ENCODE measurements at regions of chr13 and their contacts with region 1.

Region 1: DNA sequence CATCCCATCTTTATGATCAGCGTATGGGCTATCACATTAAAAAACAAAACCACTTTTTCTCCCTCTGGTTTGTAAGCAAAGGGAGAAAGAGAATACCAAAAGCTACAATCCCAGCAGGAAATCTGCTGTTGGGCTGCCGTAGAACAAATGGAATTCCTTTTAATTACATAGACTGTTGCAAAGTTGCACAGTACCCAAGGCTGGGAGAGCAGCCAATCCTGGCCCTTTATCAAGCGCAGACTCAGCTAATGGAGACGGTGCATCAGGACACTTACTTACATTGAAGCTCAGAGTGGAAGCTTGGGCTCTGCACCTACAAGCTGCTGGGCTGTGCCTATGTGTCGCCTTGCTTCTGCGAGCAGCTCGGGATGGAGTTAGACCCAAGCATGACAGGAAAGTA is 15.2 kb downstream of the CCNA1 start:
- DNase-seq: no peak
- H3K4me3 ChIP-seq: no peak overlapping the region
- H3K27ac ChIP-seq: no peak overlapping the region
- H3K4me1 ChIP-seq: no peaks in the 10 kb centered on the region
- H3K27me3 ChIP-seq: no peaks in the 10 kb centered on the region
- CTCF ChIP-seq: no peak

Region 2: DNA sequence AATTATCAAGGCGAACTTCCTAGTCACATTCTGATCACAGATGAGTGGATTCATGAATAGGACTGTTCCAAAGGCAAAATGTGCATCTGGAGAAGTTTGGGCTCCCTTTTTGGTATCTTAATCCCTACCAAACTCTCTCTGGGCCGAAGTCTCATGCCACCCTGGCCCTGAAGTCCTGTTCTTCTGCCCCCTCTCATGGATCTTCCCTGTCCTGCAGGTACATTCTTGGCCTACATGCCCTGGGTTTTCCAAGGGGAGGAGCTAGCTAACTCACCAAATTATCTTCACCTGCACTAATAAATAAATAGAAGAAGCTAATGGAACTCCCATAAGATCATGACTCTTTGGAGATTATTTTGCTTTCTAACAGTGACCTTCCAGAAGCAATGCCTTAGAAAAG is 276.6 kb after region 1 on chr13:
- intact Hi-C with region 1: loop called (anchors 10 kb)
- DNase-seq: no peak
- H3K4me3 ChIP-seq: no peak overlapping the region
- H3K27ac ChIP-seq: no peak overlapping the region
- H3K4me1 ChIP-seq: no peaks in the 10 kb centered on the region
- H3K27me3 ChIP-seq: no peaks in the 10 kb centered on the region
- CTCF ChIP-seq: no peak